Motor neuron (in vitro differentiated cells): ENCODE measurements at regions of chr11 and their contacts with region 1.

Region 1: GRCh38 chr11:14249121-14249963 is 109.6 kb downstream of the RRAS2 start:
- ATAC-seq: peak; percentile 64 to 91 (median 84)
- H3K4me3 ChIP-seq: no peak overlapping the region
- H3K27ac ChIP-seq: no peak overlapping the region
- H3K4me1 ChIP-seq: peaks cover 13 to 15% of the 10 kb centered on the region in 2 donors

Region 2: DNA sequence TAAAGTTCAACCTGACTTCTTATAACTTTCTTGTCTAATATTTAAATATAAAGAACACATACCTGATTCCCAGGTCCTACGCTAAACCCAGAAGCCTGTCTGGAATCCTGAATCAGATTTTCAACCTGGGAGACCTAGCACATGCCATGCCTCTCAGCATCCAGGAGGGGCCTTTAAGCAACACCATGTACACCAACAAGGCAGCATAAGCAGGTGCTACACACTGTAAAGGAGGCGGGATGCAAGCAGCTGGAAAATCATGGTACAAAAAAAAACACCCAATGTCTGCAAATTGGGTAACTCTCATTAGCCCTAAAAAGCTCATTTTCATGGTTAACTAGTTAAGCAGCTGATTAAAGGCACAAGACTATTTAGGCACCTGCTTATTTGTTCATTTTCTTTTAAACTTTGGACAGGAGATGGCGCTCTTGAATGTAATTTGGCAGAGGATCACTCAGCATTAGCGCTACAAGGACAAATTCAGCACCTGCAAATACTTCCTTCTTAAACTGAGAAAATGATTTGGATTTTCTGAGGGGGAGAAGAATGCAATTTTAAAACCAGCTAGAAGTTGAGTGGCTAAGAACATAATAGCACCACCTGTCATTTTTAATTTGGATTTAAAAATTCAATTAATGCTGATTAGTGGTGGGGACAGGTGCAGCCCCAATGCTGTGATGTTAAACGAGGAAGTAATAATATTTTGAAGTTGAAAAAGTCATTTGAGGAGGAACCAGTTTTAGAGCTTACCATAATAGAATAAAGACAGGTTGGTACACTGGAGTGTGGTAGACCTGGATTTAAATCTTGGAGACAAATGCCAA is 476.9 kb before region 1 on chr11:
- in situ Hi-C with region 1: loop called in 8 of 9 experiments (anchors 10 to 25 kb)
- ATAC-seq: peak; percentile 60 to 79 (median 72)
- H3K4me3 ChIP-seq: no peak overlapping the region
- H3K27ac ChIP-seq: no peak overlapping the region
- H3K4me1 ChIP-seq: no peaks in the 10 kb centered on the region

Region 3: DNA sequence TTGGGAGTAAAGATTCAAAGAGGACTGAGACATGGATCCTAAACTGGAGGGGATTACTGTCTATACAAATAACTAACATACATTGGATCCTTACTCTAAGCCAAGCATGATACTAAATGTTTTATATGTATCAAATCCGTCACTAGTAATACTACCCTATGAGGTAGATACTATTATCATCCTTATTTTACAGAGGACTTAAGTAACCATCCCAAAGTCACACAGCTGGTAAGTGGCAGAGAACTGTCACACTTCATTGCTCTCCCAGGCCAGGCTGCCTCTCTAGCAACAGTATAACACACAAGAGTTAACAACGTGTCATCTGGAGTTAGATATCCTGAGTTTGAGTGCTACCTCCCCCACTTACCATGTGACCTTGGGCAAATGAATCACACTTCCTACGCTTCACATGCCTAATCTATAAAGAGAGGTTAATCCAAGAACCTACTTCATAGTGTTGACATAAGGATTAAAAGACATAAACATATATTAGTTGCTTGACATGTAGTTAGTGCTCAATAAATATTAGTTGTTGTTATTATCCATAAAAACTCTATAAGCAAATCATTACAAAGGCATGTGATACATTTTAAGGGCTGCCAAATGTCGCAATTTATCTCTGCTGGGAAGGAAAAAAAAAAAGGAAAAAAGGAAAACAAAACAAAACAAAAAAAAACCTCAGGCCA is 320.6 kb before region 1 on chr11:
- in situ Hi-C with region 1: no loop called
- ATAC-seq: peak in 7 of 8 experiments; percentile 23 to 76 (median 38)
- H3K4me3 ChIP-seq: no peak overlapping the region
- H3K27ac ChIP-seq: peak overlapping the region in 1 of 2 donors; percentile 31
- H3K4me1 ChIP-seq: peaks cover 29 to 34% of the 10 kb centered on the region in 2 donors

Region 4: GRCh38 chr11:13955971-13956421 is 293.3 kb before region 1 on chr11:
- in situ Hi-C with region 1: loop called in 6 of 9 experiments (anchors 10 to 25 kb)
- ATAC-seq: peak in 5 of 8 experiments; percentile 37 to 62 (median 46)
- H3K4me3 ChIP-seq: no peak overlapping the region
- H3K27ac ChIP-seq: no peak overlapping the region
- H3K4me1 ChIP-seq: peaks cover 21% of the 10 kb centered on the region in 2 donors